ENCODE measurements at regions of chr20 and their contacts with region 1.

Region 1: DNA sequence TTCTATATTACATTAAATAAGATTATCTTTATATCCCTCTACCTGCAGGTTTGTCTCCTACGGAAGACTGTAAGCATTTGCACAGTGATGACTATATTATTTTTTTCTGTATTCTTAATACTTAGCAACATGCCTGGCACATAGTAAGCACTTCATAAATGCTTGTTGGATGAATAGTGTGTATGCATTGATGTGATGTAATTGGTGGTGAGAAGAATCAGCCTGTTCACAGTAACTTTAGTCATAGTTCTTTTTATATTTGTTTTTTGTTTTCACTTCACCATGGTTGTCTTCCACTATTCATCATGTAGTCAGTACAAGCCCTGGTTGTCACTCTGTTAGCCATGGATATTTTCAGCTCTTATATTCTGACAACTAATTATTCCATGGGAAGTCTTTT is 184.0 kb upstream of the FLRT3 start:
- DNase-seq: peak; percentile 93
- H3K4me3 ChIP-seq: no peak overlapping the region
- H3K27ac ChIP-seq: peak overlapping the region; percentile 99
- H3K4me1 ChIP-seq: peaks cover 36% of the 10 kb centered on the region
- H3K27me3 ChIP-seq: no peaks in the 10 kb centered on the region
- CTCF ChIP-seq: no peak

Region 2: GRCh38 chr20:14415492-14415891 is 105.9 kb before region 1 on chr20:
- CTCF ChIA-PET with region 1: no interaction called
- dilution Hi-C with region 1: loop called (anchors 5 kb)
- in situ Hi-C with region 1: no loop called
- intact Hi-C with region 1: no loop called
- DNase-seq: no peak
- H3K4me3 ChIP-seq: no peak overlapping the region
- H3K27ac ChIP-seq: no peak overlapping the region
- H3K4me1 ChIP-seq: no peaks in the 10 kb centered on the region
- H3K27me3 ChIP-seq: no peaks in the 10 kb centered on the region
- CTCF ChIP-seq: no peak

Region 3: DNA sequence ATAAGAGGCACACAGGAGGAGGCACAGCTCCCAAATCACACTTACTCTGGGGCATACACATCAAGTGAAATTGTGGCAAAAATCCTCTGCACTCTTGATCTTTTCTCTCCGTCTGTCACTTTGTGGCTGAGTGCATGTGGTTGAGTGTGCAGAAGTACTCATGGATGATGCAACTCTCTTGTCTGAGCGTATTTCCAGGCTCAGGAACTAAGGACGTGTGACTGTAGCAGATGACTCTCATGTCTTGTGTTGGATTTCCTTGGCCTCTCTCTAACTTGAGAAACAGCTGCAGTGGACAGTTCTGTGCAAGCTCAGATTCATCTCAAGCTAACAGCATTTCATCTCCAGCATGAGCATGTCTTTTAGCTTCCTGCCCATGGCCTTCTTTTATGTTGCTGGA is 61.4 kb after region 1 on chr20:
- CTCF ChIA-PET with region 1: no interaction called
- dilution Hi-C with region 1: no loop called
- in situ Hi-C with region 1: no loop called
- intact Hi-C with region 1: loop called (anchors 1 kb)
- DNase-seq: peak; percentile 72
- H3K4me3 ChIP-seq: no peak overlapping the region
- H3K27ac ChIP-seq: peak overlapping the region; percentile 35
- H3K4me1 ChIP-seq: peaks cover 24% of the 10 kb centered on the region
- H3K27me3 ChIP-seq: no peaks in the 10 kb centered on the region
- CTCF ChIP-seq: no peak

Region 4: GRCh38 chr20:14775518-14776203 is 254.2 kb after region 1 on chr20:
- CTCF ChIA-PET with region 1: no interaction called
- dilution Hi-C with region 1: no loop called
- in situ Hi-C with region 1: no loop called
- intact Hi-C with region 1: loop called (anchors 2 kb)
- DNase-seq: peak; percentile 91
- H3K4me3 ChIP-seq: no peak overlapping the region
- H3K27ac ChIP-seq: no peak overlapping the region
- H3K4me1 ChIP-seq: peaks cover 9% of the 10 kb centered on the region
- H3K27me3 ChIP-seq: no peaks in the 10 kb centered on the region
- CTCF ChIP-seq: no peak

Region 5: GRCh38 chr20:15220778-15221565 is 699.5 kb after region 1 on chr20:
- CTCF ChIA-PET with region 1: no interaction called
- dilution Hi-C with region 1: no loop called
- in situ Hi-C with region 1: no loop called
- intact Hi-C with region 1: loop called (anchors 5 kb)
- DNase-seq: peak; percentile 71
- H3K4me3 ChIP-seq: no peak overlapping the region
- H3K27ac ChIP-seq: peak overlapping the region; percentile 79
- H3K4me1 ChIP-seq: peaks cover 25% of the 10 kb centered on the region
- H3K27me3 ChIP-seq: no peaks in the 10 kb centered on the region
- CTCF ChIP-seq: no peak

Measured in mammary epithelial cell (primary cell).